Ascending aorta (tissue), 2 donors: ENCODE measurements at regions of chr1 and their contacts with region 1.

Region 1: GRCh38 chr1:84944767-84945486 is 51.9 kb upstream of the LPAR3 start:
- DNase-seq: peak in 1 of 2 donors; percentile 80
- H3K4me3 ChIP-seq: peak overlapping the region; percentile 58 to 62
- H3K27ac ChIP-seq: peak overlapping the region; percentile 53 to 60
- H3K4me1 ChIP-seq: no peaks in the 10 kb centered on the region
- H3K27me3 ChIP-seq: no peaks in the 10 kb centered on the region
- CTCF ChIP-seq: peak; percentile 85 to 89 (median 89)

Region 2: GRCh38 chr1:84996846-84997666 is 52.1 kb after region 1 on chr1 and contains the start of gene MCOLN2:
- intact Hi-C with region 1: loop called (anchors 5 kb)
- DNase-seq: no peak
- H3K4me3 ChIP-seq: peak within 1 kb of the TSS; percentile 67 to 94
- H3K27ac ChIP-seq: no peak within 1 kb of the TSS
- H3K4me1 ChIP-seq: peaks cover 6 to 8% of the 10 kb centered on the region in 2 donors
- H3K27me3 ChIP-seq: no peaks in the 10 kb centered on the region
- CTCF ChIP-seq: no peak
- total RNA-seq, gene MCOLN2: not detected

Region 3: GRCh38 chr1:85027242-85027983 is 82.5 kb after region 1 on chr1:
- intact Hi-C with region 1: loop called (anchors 1 kb)
- DNase-seq: no peak
- H3K4me3 ChIP-seq: no peak overlapping the region
- H3K27ac ChIP-seq: no peak overlapping the region
- H3K4me1 ChIP-seq: no peaks in the 10 kb centered on the region
- H3K27me3 ChIP-seq: no peaks in the 10 kb centered on the region
- CTCF ChIP-seq: peak in 1 of 3 experiments; percentile 37

Region 4: GRCh38 chr1:85068846-85069245 is 123.9 kb after region 1 on chr1:
- intact Hi-C with region 1: no loop called
- DNase-seq: no peak
- H3K4me3 ChIP-seq: no peak overlapping the region
- H3K27ac ChIP-seq: no peak overlapping the region
- H3K4me1 ChIP-seq: no peaks in the 10 kb centered on the region
- H3K27me3 ChIP-seq: no peaks in the 10 kb centered on the region
- CTCF ChIP-seq: no peak

Region 5: GRCh38 chr1:85078903-85079302 is 134.0 kb after region 1 on chr1:
- intact Hi-C with region 1: loop called (anchors 5 kb)
- DNase-seq: no peak
- H3K4me3 ChIP-seq: no peak overlapping the region
- H3K27ac ChIP-seq: no peak overlapping the region
- H3K4me1 ChIP-seq: no peaks in the 10 kb centered on the region
- H3K27me3 ChIP-seq: no peaks in the 10 kb centered on the region
- CTCF ChIP-seq: peak; percentile 5 to 37 (median 13)

Region 6: GRCh38 chr1:85259118-85259911 is 314.4 kb after region 1 on chr1 and contains the start of gene C1orf52:
- intact Hi-C with region 1: loop called (anchors 2 kb)
- DNase-seq: peak; percentile 83 to 98
- H3K4me3 ChIP-seq: peak within 1 kb of the TSS; percentile 70 to 99
- H3K27ac ChIP-seq: peak within 1 kb of the TSS; percentile 86 to 89
- H3K4me1 ChIP-seq: peaks cover 7 to 29% of the 10 kb centered on the region in 2 donors
- H3K27me3 ChIP-seq: no peaks in the 10 kb centered on the region
- CTCF ChIP-seq: peak; percentile 97 to 99 (median 98)
- total RNA-seq, gene C1orf52: 2.3 TPM